Activated B cell treated with CpG ODN at 0.5 μM for 24 hours (primary cell): ENCODE measurements at regions of chr9 and their contacts with region 1.

Region 1: GRCh38 chr9:100322954-100323536 is 29.7 kb downstream of the TEX10 start:
- DNase-seq: no peak
- ATAC-seq: no peak
- H3K4me3 Mint-ChIP-seq: no peak overlapping the region
- H3K27ac Mint-ChIP-seq: no peak overlapping the region
- H3K4me1 Mint-ChIP-seq: peaks cover 2% of the 10 kb centered on the region
- H3K27me3 Mint-ChIP-seq: no peaks in the 10 kb centered on the region
- CTCF ChIP-seq: no peak

Region 2: GRCh38 chr9:100240512-100240911 is 82.5 kb before region 1 on chr9:
- CTCF ChIA-PET with region 1: no interaction called
- POLR2A ChIA-PET with region 1: no interaction called
- intact Hi-C with region 1: no loop called
- DNase-seq: no peak
- ATAC-seq: no peak
- H3K4me3 Mint-ChIP-seq: no peak overlapping the region
- H3K27ac Mint-ChIP-seq: no peak overlapping the region
- H3K4me1 Mint-ChIP-seq: no peaks in the 10 kb centered on the region
- H3K27me3 Mint-ChIP-seq: no peaks in the 10 kb centered on the region
- CTCF ChIP-seq: no peak

Region 3: GRCh38 chr9:100341889-100342288 is 18.8 kb after region 1 on chr9:
- CTCF ChIA-PET with region 1: interaction called, 10 read pairs
- POLR2A ChIA-PET with region 1: interaction called, 3 read pairs
- intact Hi-C with region 1: no loop called
- DNase-seq: no peak
- ATAC-seq: no peak
- H3K4me3 Mint-ChIP-seq: no peak overlapping the region
- H3K27ac Mint-ChIP-seq: no peak overlapping the region
- H3K4me1 Mint-ChIP-seq: peaks cover 30% of the 10 kb centered on the region
- H3K27me3 Mint-ChIP-seq: no peaks in the 10 kb centered on the region
- CTCF ChIP-seq: no peak

Region 4: GRCh38 chr9:100370064-100370723 is 47.1 kb after region 1 on chr9:
- CTCF ChIA-PET with region 1: no interaction called
- POLR2A ChIA-PET with region 1: no interaction called
- intact Hi-C with region 1: no loop called
- DNase-seq: no peak
- ATAC-seq: no peak
- H3K4me3 Mint-ChIP-seq: no peak overlapping the region
- H3K27ac Mint-ChIP-seq: no peak overlapping the region
- H3K4me1 Mint-ChIP-seq: no peaks in the 10 kb centered on the region
- H3K27me3 Mint-ChIP-seq: no peaks in the 10 kb centered on the region
- CTCF ChIP-seq: no peak